ENCODE measurements at regions of chr3 and their contacts with region 1.

Region 1: DNA sequence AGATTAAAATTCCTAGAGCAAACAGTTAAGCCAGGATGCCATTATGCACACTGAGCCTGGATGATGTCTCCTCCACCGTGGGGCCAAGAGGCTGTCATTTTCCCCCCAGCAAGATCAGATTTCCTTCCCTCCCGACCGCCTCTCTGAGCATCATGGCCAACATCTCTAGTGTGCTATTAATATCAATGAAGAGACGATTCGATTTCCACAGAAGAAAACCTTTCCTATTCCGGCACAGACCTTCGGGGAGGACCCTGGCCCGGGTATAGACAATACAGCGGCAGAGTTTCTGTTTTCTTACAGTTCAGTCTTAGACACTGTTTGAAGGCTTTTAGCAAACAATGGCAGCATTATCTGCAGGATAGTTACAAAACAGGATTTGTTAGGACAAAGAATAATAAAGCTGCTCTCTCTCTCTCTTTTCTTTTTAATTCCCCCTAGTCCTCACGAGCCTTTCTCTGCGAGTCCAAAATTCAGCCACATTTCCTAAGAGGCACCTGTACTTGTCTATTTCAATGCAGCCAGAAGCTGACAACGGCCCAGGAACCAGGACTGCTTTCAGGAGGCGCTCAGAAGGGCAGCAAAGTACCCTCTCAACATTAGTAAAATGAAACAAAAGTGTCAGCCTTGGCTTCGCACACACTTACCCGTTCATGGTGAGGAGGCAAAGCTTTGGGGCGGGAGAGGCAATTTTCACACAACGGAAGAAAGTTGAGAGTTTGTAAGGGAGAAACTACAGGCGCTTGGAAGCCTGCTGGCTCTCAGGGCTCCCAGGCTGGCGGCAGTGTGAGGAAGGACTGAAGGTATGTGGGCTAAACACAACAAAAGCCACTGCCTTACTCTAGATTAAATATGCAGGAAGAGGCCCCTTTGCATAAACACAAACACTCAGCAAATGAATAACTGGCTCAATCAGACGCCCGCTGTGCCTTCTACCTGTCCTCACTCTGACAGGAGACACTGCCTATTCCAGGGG is 278.0 kb downstream of the FOXP1 start:
- DNase-seq: no peak
- H3K4me3 Mint-ChIP-seq: peak overlapping the region; percentile 53
- H3K27ac Mint-ChIP-seq: peak overlapping the region; percentile 34
- H3K4me1 Mint-ChIP-seq: peaks cover 13% of the 10 kb centered on the region
- H3K27me3 Mint-ChIP-seq: no peaks in the 10 kb centered on the region
- CTCF ChIP-seq: no peak

Region 2: DNA sequence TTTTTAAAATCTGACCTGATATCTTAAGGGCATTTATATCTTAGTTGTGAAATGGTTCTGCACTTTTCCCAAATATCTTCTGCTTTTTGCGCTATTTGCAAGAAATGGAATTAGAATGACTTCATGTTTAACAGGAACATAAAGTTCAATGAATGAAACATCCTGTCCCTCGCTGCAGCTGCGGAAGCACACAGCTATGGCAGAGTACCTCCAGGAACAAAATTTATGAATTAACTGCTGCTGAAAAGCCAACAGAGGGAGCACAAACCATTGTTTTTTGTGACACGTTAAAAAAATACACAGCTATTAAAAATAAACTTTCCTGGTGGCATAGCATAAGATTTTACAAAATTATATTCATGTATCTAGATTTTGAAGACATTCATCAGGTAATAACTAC is 588.7 kb before region 1 on chr3:
- CTCF ChIA-PET with region 1: no interaction called
- POLR2A ChIA-PET with region 1: no interaction called
- intact Hi-C with region 1: loop called (anchors 2 kb)
- DNase-seq: peak; percentile 28
- H3K4me3 Mint-ChIP-seq: no peak overlapping the region
- H3K27ac Mint-ChIP-seq: no peak overlapping the region
- H3K4me1 Mint-ChIP-seq: no peaks in the 10 kb centered on the region
- H3K27me3 Mint-ChIP-seq: peaks cover 77% of the 10 kb centered on the region
- CTCF ChIP-seq: peak; percentile 34

Region 3: GRCh38 chr3:71006810-71007785 is 298.4 kb before region 1 on chr3:
- CTCF ChIA-PET with region 1: no interaction called
- POLR2A ChIA-PET with region 1: no interaction called
- intact Hi-C with region 1: loop called (anchors 1 kb)
- DNase-seq: peak; percentile 48
- H3K4me3 Mint-ChIP-seq: no peak overlapping the region
- H3K27ac Mint-ChIP-seq: peak overlapping the region; percentile 63
- H3K4me1 Mint-ChIP-seq: peaks cover 15% of the 10 kb centered on the region
- H3K27me3 Mint-ChIP-seq: no peaks in the 10 kb centered on the region
- CTCF ChIP-seq: peak; percentile 61

Region 4: DNA sequence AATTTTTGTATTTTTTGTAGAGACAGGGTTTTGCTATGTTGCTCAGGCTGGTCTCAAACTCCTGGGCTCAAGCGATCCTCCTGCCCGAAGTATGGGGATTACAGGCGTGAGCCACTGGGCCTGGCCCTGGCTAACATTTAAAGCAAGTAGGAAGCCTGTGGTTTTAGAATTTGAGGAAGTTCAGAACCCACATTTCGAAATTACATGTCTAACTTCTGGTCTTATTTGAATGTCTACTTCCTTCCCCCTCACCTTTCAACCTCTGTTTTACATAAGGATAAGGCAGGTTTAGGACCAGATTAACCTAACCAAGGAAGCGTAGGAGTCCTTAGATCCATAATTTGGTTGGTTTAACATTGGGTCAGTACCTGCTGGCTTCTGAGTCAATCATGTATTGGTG is 599.9 kb after region 1 on chr3:
- CTCF ChIA-PET with region 1: no interaction called
- POLR2A ChIA-PET with region 1: no interaction called
- intact Hi-C with region 1: no loop called
- DNase-seq: no peak
- H3K4me3 Mint-ChIP-seq: no peak overlapping the region
- H3K27ac Mint-ChIP-seq: no peak overlapping the region
- H3K4me1 Mint-ChIP-seq: peaks cover 6% of the 10 kb centered on the region
- H3K27me3 Mint-ChIP-seq: peaks cover 11% of the 10 kb centered on the region
- CTCF ChIP-seq: no peak